Mammary epithelial cell (primary cell): ENCODE measurements at regions of chr6 and their contacts with region 1.

Region 1: DNA sequence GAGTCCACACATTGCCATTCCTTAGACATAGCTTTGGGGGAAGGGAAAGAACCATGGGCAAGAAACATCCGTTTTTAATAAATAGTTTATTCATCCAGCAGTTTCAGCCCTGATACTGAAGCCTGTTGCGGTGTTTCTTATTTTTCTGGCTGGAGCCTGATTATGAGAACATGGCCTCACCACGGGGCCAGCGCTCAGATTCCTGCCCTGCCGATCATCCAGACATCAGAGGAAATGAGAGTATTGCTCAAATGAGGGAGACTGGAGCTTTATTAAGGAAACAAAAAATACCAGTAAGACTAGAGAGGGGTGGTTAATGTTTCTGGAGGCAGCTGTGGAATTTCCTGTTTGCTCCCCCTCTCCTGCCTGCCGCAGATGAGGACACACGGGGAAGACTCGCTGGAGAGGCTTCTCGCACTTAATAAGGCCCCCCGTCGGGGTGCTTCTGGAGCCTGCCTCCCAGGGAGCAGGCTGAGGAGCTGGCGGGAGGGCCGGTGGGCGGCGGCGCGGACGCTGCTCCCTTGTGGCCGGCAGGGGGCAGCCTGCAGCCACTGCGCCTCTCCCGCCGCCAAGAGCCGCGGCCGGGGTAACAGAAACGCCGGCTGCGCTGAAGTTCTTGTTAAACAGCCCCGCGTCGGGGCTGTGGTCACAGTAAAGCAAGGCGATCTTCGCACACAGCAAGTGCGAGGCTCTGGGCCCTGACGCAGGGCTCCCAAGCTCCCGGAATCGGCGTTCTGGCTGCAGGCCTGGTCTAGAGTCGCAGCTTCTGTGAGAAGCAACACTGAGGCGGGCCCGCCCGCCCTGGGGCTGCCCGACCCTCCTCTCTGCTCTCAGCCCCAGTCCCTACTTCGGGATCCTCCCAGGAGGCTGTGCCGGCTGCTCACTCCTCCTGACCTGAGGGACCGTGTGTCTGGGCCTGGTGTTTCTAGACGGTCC is 17.5 kb downstream of the LEMD2 start:
- DNase-seq: peak; percentile 51
- H3K4me3 ChIP-seq: no peak overlapping the region
- H3K27ac ChIP-seq: no peak overlapping the region
- H3K4me1 ChIP-seq: peaks cover 29% of the 10 kb centered on the region
- H3K27me3 ChIP-seq: no peaks in the 10 kb centered on the region
- CTCF ChIP-seq: peak; percentile 58 to 89

Region 2: GRCh38 chr6:33788694-33789549 is 17.5 kb after region 1 on chr6 and contains the start of gene LEMD2:
- CTCF ChIA-PET with region 1: no interaction called
- dilution Hi-C with region 1: no loop called
- in situ Hi-C with region 1: no loop called
- intact Hi-C with region 1: no loop called
- DNase-seq: peak; percentile 88
- H3K4me3 ChIP-seq: peak within 1 kb of the TSS; percentile 71 to 79 (median 76)
- H3K27ac ChIP-seq: peak within 1 kb of the TSS; percentile 73
- H3K4me1 ChIP-seq: peaks cover 25% of the 10 kb centered on the region
- H3K27me3 ChIP-seq: no peaks in the 10 kb centered on the region
- CTCF ChIP-seq: no peak
- total RNA-seq, gene LEMD2: 47.5 to 63.2 TPM

Region 3: GRCh38 chr6:33815854-33816253 is 44.4 kb after region 1 on chr6:
- CTCF ChIA-PET with region 1: no interaction called
- dilution Hi-C with region 1: loop called (anchors 5 kb)
- in situ Hi-C with region 1: no loop called
- intact Hi-C with region 1: no loop called
- DNase-seq: no peak
- H3K4me3 ChIP-seq: no peak overlapping the region
- H3K27ac ChIP-seq: no peak overlapping the region
- H3K4me1 ChIP-seq: no peaks in the 10 kb centered on the region
- H3K27me3 ChIP-seq: no peaks in the 10 kb centered on the region
- CTCF ChIP-seq: no peak

Region 4: GRCh38 chr6:33958526-33959333 is 187.3 kb after region 1 on chr6:
- CTCF ChIA-PET with region 1: no interaction called
- dilution Hi-C with region 1: no loop called
- in situ Hi-C with region 1: no loop called
- intact Hi-C with region 1: loop called (anchors 5 kb)
- DNase-seq: no peak
- H3K4me3 ChIP-seq: no peak overlapping the region
- H3K27ac ChIP-seq: no peak overlapping the region
- H3K4me1 ChIP-seq: peaks cover 27% of the 10 kb centered on the region
- H3K27me3 ChIP-seq: no peaks in the 10 kb centered on the region
- CTCF ChIP-seq: peak; percentile 15 to 37

Region 5: DNA sequence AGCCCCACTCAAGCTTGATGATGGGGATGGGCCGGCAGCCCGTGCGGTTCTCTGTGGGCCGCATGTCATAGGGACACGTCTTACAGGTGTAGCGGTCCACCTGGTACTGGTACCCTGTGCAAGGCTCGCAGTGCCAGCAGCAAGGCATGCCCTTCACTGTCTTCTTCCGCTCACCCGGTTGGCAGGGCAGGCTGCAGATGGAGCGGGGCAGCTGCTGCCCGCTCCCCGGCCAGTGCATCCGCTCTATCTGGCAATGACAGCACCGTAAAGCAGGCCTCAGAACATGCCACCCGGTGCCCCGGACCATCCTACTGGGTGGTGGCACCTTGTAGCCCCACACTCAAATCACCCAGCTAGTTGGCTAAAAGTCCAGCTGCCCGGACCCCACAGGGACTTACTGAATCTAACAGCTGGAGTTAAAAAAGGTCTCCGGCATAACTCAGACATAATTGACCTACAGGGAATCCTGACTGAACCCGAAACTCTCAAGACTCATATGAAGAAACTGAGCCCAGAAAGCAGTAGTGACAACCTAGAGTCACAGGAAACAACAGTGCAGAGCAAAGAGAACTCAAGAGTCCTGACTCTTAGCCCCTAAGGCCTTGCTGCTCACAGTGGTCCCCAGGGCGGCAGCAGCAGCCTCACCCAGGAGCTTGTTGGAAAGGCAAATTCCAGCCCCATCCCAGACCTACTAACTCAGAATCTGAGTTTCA is 265.1 kb after region 1 on chr6:
- CTCF ChIA-PET with region 1: no interaction called
- dilution Hi-C with region 1: no loop called
- in situ Hi-C with region 1: loop called in 1 of 2 experiments (anchors 10 kb)
- intact Hi-C with region 1: no loop called
- DNase-seq: no peak
- H3K4me3 ChIP-seq: no peak overlapping the region
- H3K27ac ChIP-seq: no peak overlapping the region
- H3K4me1 ChIP-seq: no peaks in the 10 kb centered on the region
- H3K27me3 ChIP-seq: no peaks in the 10 kb centered on the region
- CTCF ChIP-seq: no peak

Region 6: GRCh38 chr6:34154668-34155447 is 383.4 kb after region 1 on chr6:
- CTCF ChIA-PET with region 1: interaction called, 3 read pairs
- dilution Hi-C with region 1: no loop called
- in situ Hi-C with region 1: loop called (anchors 10 kb)
- intact Hi-C with region 1: loop called (anchors 1 kb)
- DNase-seq: no peak
- H3K4me3 ChIP-seq: peak overlapping the region in 1 of 3 experiments; percentile 34
- H3K27ac ChIP-seq: no peak overlapping the region
- H3K4me1 ChIP-seq: peaks cover 8% of the 10 kb centered on the region
- H3K27me3 ChIP-seq: peaks cover 5% of the 10 kb centered on the region
- CTCF ChIP-seq: peak; percentile 86 to 99